ENCODE measurements at regions of chr2 and their contacts with region 1.

Region 1: DNA sequence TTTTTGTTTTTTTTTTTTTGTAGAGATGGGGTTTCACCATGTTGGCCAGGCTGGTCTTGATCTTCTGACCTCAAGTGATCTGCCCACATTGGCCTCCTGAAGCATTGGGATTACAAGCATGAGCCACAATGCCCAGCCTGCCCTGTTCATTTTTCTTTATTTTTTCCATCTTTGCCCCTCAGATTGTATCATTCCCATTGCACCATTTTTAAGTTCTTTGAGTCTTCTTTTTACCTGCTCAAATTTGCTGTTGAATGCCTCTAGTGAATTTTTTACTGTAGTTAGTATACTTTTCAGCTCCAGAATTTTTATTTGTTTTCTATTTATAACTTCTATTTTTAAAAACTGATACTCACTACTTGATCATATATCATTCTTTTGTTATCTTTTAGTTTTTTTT is 101.4 kb upstream of the SLC4A10 start:
- DNase-seq: no peak

Region 2: DNA sequence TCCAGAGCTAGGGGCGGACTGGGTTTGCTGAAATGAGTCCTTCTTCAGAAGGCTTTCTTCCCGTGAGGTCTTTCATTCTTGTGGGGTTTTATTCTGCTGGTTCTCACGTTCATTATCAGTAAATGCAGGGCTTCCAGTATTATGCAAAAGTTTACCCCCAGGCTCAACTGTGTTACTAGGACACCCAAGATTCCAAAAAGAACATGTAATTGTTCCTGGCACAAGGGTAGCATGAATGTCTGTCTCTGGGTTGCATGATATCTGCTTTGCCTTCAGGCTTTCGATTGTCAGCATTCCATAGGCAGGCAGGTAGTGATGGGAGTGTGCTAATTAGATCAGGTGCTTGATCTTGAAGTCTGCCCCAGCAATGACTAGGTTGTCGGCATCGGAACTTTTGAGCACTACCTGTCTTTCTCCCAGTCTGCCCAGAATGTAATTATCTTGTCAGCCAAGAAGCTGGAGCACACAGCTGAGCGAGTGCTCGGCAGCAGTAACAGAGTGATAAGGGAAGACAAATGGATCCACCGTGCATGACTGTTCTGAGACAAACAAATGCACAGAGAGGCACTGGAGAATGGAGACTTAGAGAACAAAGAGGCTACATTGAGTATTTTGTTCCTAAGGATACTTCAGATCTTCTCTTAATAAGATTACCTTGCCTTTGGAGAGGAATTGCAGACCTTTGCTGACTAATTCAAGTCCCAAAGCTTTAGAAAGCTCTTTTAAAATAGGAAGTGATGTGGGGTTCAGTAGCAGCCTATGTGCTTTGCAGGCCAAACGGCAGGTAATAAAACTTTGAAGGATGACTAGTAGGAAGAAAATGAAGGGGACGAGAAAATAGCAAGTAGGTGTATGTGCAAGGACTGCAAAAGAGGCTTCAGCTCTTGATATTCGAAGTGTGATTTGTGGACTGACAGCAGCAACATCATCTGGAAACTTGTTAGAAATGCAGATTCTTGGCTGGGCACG is 1364.7 kb before region 1 on chr2:
- intact Hi-C with region 1: loop called in 1 of 2 experiments (anchors 10 kb)
- DNase-seq: no peak

Measured in posterior vena cava (tissue), 2 donors.